Natural killer cell (primary cell): ENCODE measurements at regions of chr16 and their contacts with region 1.

Region 1: DNA sequence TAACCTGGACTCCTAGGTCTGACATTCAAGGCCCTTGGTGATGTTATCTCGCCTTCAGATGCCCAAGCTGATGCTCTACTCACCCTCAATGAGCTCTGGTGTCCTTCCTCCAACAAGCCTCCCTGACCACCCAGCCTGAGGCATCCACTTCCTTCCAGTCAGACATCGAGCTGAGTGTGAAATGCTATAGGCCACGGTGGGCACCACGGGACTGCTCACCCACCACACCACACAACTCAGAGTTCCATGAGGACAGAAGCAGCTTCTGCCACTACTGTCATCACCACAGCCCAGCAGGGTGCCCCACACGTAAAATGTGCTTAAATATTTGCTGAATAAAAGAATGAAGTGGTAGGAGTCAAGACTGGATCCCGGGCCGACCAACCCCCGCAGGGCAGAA is 12.0 kb downstream of the CREBBP start:
- DNase-seq: no peak
- ATAC-seq: peak; percentile 11 to 47 (median 29)
- H3K4me3 ChIP-seq: no peak overlapping the region
- H3K4me3 Mint-ChIP-seq: peak overlapping the region; percentile 38
- H3K27ac ChIP-seq: no peak overlapping the region
- H3K27ac Mint-ChIP-seq: peak overlapping the region; percentile 82 to 85
- H3K4me1 ChIP-seq: peaks cover 54% of the 10 kb centered on the region
- H3K4me1 Mint-ChIP-seq: peaks cover 84 to 89% of the 10 kb centered on the region in 2 donors
- H3K27me3 ChIP-seq: no peaks in the 10 kb centered on the region
- H3K27me3 Mint-ChIP-seq: no peaks in the 10 kb centered on the region
- CTCF ChIP-seq: no peak

Region 2: GRCh38 chr16:3829631-3830536 is 38.7 kb before region 1 on chr16:
- intact Hi-C with region 1: loop called (anchors 5 kb)
- DNase-seq: no peak
- ATAC-seq: peak in 1 of 3 donors; percentile 41
- H3K4me3 ChIP-seq: no peak overlapping the region
- H3K4me3 Mint-ChIP-seq: no peak overlapping the region
- H3K27ac ChIP-seq: no peak overlapping the region
- H3K27ac Mint-ChIP-seq: peak overlapping the region; percentile 23 to 70
- H3K4me1 ChIP-seq: peaks cover 22% of the 10 kb centered on the region
- H3K4me1 Mint-ChIP-seq: peaks cover 65 to 69% of the 10 kb centered on the region in 2 donors
- H3K27me3 ChIP-seq: no peaks in the 10 kb centered on the region
- H3K27me3 Mint-ChIP-seq: no peaks in the 10 kb centered on the region
- CTCF ChIP-seq: no peak

Region 3: DNA sequence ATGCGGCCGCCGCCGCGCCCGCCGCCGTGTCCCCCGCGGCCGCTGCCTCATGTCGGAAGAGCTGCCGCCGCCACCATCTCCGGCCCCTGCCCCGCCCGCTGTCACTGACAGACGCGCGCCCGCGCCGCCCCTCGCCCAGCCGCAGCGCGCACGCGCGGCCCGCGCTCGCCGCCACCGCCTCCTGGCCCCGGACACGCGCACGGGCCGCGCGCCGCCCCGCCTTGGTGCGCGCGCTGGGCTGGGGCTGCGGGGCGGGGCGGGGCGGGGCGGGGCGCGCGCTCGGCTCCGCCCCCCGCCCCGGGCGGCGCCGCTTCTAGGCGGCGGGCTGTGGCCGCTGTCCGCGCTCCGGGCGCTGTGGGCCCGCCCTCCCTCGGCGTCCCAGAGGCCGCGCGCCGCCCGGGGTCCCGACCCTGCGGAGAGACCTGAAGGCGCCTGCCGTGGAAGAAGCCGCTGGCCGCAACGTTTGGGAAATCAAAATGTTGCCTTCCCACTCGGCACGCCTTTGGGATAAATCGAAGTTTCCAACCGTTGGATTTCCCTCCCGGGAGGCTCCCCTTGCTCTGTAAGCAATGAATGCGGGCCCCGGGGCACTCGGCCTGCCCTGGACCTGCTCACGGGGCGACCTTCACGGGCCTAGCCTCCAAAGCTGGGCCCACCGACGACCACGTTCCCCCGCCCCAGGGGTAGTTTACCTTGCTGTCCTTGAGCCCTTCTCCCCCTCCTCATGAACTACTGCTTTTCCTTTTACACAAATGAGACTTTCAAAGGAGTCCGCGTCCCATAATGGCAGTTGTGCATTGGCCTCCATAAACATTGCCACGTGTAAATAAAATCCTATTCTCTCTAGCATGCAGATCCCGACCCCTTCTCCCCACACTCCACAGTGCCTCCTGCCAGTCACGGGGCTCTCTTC is 248.0 kb after region 1 on chr16 and contains the start of gene ADCY9:
- intact Hi-C with region 1: no loop called
- DNase-seq: peak; percentile 80 to 93
- ATAC-seq: peak; percentile 77 to 92 (median 78)
- H3K4me3 ChIP-seq: peak within 1 kb of the TSS; percentile 56
- H3K4me3 Mint-ChIP-seq: peak within 1 kb of the TSS; percentile 88
- H3K27ac ChIP-seq: peak within 1 kb of the TSS; percentile 24
- H3K27ac Mint-ChIP-seq: peak within 1 kb of the TSS; percentile 71 to 88
- H3K4me1 ChIP-seq: peaks cover 41% of the 10 kb centered on the region
- H3K4me1 Mint-ChIP-seq: peaks cover 42 to 44% of the 10 kb centered on the region in 2 donors
- H3K27me3 ChIP-seq: no peaks in the 10 kb centered on the region
- H3K27me3 Mint-ChIP-seq: no peaks in the 10 kb centered on the region
- CTCF ChIP-seq: no peak
- total RNA-seq, gene ADCY9: 28.0 to 52.4 (median 38.3) TPM